ENCODE measurements at regions of chr2 and their contacts with region 1.

Region 1: DNA sequence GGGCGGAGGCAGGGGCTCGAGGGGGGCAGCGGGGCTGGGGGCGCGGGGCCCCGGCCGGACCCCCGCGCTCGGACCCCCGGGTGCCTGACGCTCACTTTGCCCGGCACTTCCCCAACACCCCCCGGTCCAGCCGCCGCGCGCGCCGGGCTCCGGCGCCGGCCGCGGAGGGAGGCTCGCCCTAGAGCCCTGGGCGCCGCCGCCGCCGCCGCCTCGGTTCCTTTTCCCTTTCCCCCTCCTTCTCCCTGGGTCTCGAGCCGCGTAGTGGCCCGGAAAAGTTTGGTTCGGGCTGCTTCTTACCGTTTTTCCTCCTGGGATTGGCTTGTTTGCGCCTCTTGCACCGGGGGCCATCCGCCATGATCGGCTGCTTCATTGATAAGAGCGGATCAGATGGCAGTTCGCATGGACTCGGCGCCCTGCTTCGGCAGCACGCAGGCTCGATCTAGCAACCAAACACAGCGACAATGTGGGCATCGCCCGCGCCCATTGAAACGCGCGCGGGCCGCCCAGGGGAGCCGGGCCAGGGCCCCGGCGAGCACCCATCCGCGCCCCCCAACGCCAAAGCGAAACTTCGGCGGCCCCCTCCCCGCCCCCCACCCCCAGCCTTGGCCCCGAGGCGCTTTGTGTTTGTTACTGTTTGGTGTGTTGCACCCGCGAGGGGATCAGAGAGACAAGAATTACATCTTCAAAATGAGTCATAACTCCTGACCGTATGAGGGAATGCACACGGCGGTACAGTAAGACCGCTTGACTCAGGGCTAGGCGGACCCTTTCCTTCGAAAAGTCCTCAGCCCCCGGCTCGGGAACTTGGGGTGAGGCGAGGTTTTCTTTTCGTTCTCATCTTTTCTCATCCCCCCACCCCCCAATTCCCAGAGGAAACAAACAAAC is 2.7 kb downstream of the ZEB2 start:
- DNase-seq: peak; percentile 85
- H3K4me3 Mint-ChIP-seq: no peak overlapping the region
- H3K27ac Mint-ChIP-seq: no peak overlapping the region
- H3K4me1 Mint-ChIP-seq: peaks cover 17% of the 10 kb centered on the region
- H3K27me3 Mint-ChIP-seq: peaks cover 49% of the 10 kb centered on the region

Region 2: GRCh38 chr2:143468341-143468888 is 1048.8 kb before region 1 on chr2:
- intact Hi-C with region 1: loop called (anchors 10 kb)
- DNase-seq: no peak
- H3K4me3 Mint-ChIP-seq: no peak overlapping the region
- H3K27ac Mint-ChIP-seq: peak overlapping the region; percentile 81
- H3K4me1 Mint-ChIP-seq: peaks cover 18% of the 10 kb centered on the region
- H3K27me3 Mint-ChIP-seq: no peaks in the 10 kb centered on the region

Region 3: GRCh38 chr2:143936848-143937722 is 580.1 kb before region 1 on chr2:
- intact Hi-C with region 1: loop called (anchors 10 kb)
- DNase-seq: peak; percentile 58
- H3K4me3 Mint-ChIP-seq: peak overlapping the region; percentile 66
- H3K27ac Mint-ChIP-seq: peak overlapping the region; percentile 43
- H3K4me1 Mint-ChIP-seq: peaks cover 11% of the 10 kb centered on the region
- H3K27me3 Mint-ChIP-seq: peaks cover 65% of the 10 kb centered on the region

Region 4: GRCh38 chr2:144414324-144414845 is 102.8 kb before region 1 on chr2:
- intact Hi-C with region 1: loop called (anchors 1 kb)
- DNase-seq: no peak
- H3K4me3 Mint-ChIP-seq: peak overlapping the region; percentile 12
- H3K27ac Mint-ChIP-seq: peak overlapping the region; percentile 55
- H3K4me1 Mint-ChIP-seq: peaks cover 18% of the 10 kb centered on the region
- H3K27me3 Mint-ChIP-seq: no peaks in the 10 kb centered on the region

Region 5: GRCh38 chr2:144471305-144472045 is 45.7 kb before region 1 on chr2:
- intact Hi-C with region 1: loop called (anchors 1 kb)
- DNase-seq: no peak
- H3K4me3 Mint-ChIP-seq: peak overlapping the region; percentile 24
- H3K27ac Mint-ChIP-seq: peak overlapping the region; percentile 72
- H3K4me1 Mint-ChIP-seq: peaks cover 11% of the 10 kb centered on the region
- H3K27me3 Mint-ChIP-seq: peaks cover 1% of the 10 kb centered on the region

Region 6: GRCh38 chr2:144493027-144493809 is 24.0 kb before region 1 on chr2:
- intact Hi-C with region 1: no loop called
- DNase-seq: no peak
- H3K4me3 Mint-ChIP-seq: no peak overlapping the region
- H3K27ac Mint-ChIP-seq: no peak overlapping the region
- H3K4me1 Mint-ChIP-seq: peaks cover 15% of the 10 kb centered on the region
- H3K27me3 Mint-ChIP-seq: no peaks in the 10 kb centered on the region

Region 7: DNA sequence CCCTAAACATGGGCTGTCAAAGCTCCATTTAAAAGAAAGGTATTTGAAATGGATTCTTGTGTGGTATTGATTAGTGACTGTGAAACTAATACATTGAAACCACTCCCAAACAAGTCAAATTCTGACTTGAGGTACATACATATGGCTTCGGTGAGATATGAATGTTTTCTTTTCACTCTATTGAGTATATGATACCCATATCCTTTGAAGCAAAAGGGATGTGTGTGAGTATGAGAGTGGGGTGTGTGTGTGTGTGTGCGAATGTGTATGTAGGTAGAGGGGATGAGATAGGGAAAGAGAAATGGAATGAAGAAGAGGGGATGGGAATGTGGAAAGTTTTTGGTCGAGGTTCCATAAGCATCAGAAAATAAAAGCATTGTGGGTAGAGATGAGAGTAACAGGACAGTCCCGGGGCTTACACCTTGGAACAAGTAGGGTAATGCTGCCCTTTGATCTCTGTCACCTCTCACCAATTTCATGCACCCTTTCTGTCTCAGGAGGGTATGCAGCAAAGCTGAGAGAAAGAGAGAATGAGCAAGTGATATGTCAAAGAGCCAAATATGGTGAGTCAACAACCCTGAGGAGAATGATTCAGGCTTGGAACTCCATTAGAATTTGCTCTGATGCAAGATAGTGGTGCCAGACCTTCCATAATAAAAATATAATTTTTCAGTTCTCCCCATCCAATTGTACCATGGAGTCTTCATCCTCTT is 66.7 kb after region 1 on chr2:
- intact Hi-C with region 1: no loop called
- DNase-seq: no peak
- H3K4me3 Mint-ChIP-seq: no peak overlapping the region
- H3K27ac Mint-ChIP-seq: no peak overlapping the region
- H3K4me1 Mint-ChIP-seq: peaks cover 3% of the 10 kb centered on the region
- H3K27me3 Mint-ChIP-seq: peaks cover 16% of the 10 kb centered on the region

Region 8: GRCh38 chr2:144747571-144747970 is 230.3 kb after region 1 on chr2:
- intact Hi-C with region 1: no loop called
- DNase-seq: no peak
- H3K4me3 Mint-ChIP-seq: no peak overlapping the region
- H3K27ac Mint-ChIP-seq: no peak overlapping the region
- H3K4me1 Mint-ChIP-seq: no peaks in the 10 kb centered on the region
- H3K27me3 Mint-ChIP-seq: no peaks in the 10 kb centered on the region

Measured in activated CD4-positive, alpha-beta T cell treated with anti-CD3 and anti-CD28 coated beads, Interleukin-2, amount 10 ng/mL, durations not matched to agents 24 days and 14 days (primary cell).